Psoas muscle (tissue), 8 donors: ENCODE measurements at regions of chr7 and their contacts with region 1.

Region 1: GRCh38 chr7:54242776-54243175 is 299.4 kb upstream of the VSTM2A start:
- DNase-seq: no peak
- ATAC-seq: no peak
- H3K4me3 ChIP-seq: no peak overlapping the region
- H3K27ac ChIP-seq: no peak overlapping the region
- H3K4me1 ChIP-seq: no peaks in the 10 kb centered on the region
- H3K27me3 ChIP-seq: no peaks in the 10 kb centered on the region
- CTCF ChIP-seq: no peak

Region 2: GRCh38 chr7:54339073-54339472 is 96.3 kb after region 1 on chr7:
- intact Hi-C with region 1: loop called in 1 of 2 experiments (anchors 10 kb)
- DNase-seq: peak in 1 of 2 donors; percentile 13
- ATAC-seq: peak in 1 of 4 donors; percentile 67
- H3K4me3 ChIP-seq: no peak overlapping the region
- H3K27ac ChIP-seq: no peak overlapping the region
- H3K4me1 ChIP-seq: no peaks in the 10 kb centered on the region
- H3K27me3 ChIP-seq: no peaks in the 10 kb centered on the region
- CTCF ChIP-seq: no peak